ENCODE measurements at regions of chr2 and their contacts with region 1.

Region 1: GRCh38 chr2:95053543-95053942 is 28.0 kb downstream of the MAL start:
- DNase-seq: peak; percentile 63
- ATAC-seq: peak; percentile 86
- H3K4me3 Mint-ChIP-seq: no peak overlapping the region
- H3K27ac Mint-ChIP-seq: no peak overlapping the region
- H3K4me1 Mint-ChIP-seq: peaks cover 5% of the 10 kb centered on the region
- H3K27me3 Mint-ChIP-seq: peaks cover 4% of the 10 kb centered on the region
- CTCF ChIP-seq: no peak

Region 2: DNA sequence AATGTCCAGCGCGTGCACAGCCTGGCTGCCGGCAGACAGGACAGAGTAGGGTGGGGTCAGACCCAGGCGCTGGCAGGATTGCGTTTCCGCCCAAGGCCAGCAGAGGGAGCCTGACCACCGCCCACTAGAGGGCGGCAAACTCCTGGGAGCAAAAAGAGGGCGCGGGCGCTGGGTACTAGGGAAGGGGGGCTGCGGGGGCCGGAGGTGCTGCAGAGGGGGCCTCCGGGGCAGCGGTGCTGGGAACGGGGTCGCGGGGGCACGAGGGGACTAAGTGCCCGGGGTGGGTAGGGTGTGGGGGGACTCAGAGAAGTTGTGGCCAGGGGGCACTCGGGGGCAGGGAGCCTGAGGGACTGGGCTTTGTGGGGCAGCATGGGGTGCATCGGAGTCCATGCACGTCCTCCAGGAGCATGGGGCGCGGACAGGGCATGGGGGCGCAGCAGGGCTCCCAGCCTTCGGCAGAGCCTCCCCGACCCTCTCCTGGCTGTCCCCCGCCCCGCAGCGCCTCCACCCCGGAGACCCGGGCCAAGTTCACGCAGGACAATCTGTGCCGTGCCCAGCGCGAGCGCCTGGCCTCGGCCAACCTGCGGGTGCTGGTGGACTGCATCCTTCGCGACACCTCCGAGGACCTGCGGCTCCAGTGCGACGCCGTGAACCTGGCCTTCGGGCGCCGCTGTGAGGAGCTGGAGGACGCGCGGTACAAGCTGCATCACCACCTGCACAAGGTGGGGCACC is 179.1 kb before region 1 on chr2:
- CTCF ChIA-PET with region 1: interaction called, 19 read pairs
- POLR2A ChIA-PET with region 1: no interaction called
- DNase-seq: peak; percentile 92
- ATAC-seq: peak; percentile 80
- H3K4me3 Mint-ChIP-seq: peak overlapping the region; percentile 49
- H3K27ac Mint-ChIP-seq: no peak overlapping the region
- H3K4me1 Mint-ChIP-seq: peaks cover 10% of the 10 kb centered on the region
- H3K27me3 Mint-ChIP-seq: peaks cover 40% of the 10 kb centered on the region
- CTCF ChIP-seq: peak; percentile 83

Region 3: GRCh38 chr2:94947097-94948016 is 106.2 kb before region 1 on chr2:
- CTCF ChIA-PET with region 1: no interaction called
- POLR2A ChIA-PET with region 1: no interaction called
- DNase-seq: no peak
- ATAC-seq: no peak
- H3K4me3 Mint-ChIP-seq: no peak overlapping the region
- H3K27ac Mint-ChIP-seq: no peak overlapping the region
- H3K4me1 Mint-ChIP-seq: no peaks in the 10 kb centered on the region
- H3K27me3 Mint-ChIP-seq: peaks cover 36% of the 10 kb centered on the region
- CTCF ChIP-seq: no peak

Region 4: GRCh38 chr2:94986392-94986963 is 67.1 kb before region 1 on chr2:
- CTCF ChIA-PET with region 1: interaction called, 66 read pairs
- POLR2A ChIA-PET with region 1: interaction called, 3 read pairs
- DNase-seq: peak; percentile 75
- ATAC-seq: peak; percentile 87
- H3K4me3 Mint-ChIP-seq: no peak overlapping the region
- H3K27ac Mint-ChIP-seq: no peak overlapping the region
- H3K4me1 Mint-ChIP-seq: 0 out of 2 replicates have a peak, but pooled peaks cover 4% of the 10 kb centered on the region
- H3K27me3 Mint-ChIP-seq: no peaks in the 10 kb centered on the region
- CTCF ChIP-seq: peak; percentile 78

Region 5: DNA sequence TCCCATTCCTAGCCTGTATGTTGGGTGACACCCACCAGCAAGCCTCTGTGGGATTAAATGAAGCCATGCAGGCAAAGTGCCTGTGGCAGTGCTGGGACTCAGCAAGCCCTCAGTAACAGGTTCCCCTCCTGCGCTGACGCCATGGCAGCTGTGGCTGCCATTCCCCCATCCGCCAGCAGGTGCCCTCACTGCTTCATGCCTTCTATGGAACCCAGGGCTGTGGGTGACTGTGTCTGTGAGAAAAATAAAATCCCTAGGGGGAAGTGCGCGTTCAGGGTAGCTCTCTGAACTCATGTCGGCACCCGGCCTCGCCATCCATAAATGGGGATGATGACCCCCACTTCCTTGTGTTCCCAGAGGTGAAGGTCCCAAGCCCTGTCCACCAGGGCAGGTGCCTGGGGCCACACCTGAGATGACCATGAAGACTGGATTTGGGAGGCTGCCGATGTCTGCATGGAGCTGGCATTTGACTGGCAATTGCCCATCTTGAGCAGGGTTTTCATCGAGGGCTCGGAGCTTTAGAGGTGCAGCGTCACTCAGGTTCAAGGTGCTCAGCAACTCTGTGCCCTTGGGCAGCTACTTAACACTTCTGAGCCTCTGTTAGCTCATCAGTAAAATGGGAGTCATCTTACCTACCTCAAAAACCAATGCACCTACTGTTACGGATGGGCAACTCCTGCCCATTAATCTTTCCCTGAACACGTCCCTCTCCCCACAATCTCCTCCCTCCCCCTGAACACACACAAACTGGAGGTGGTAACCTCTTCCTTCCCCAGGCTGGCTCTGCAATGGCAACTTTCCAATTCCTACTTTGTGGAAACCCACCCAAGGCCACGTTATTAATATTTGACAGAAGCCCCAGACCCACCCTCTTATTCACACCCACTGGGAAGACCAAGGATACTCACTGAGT is 31.0 kb before region 1 on chr2:
- CTCF ChIA-PET with region 1: interaction called, 156 read pairs
- POLR2A ChIA-PET with region 1: no interaction called
- DNase-seq: peak; percentile 87
- ATAC-seq: peak; percentile 63
- H3K4me3 Mint-ChIP-seq: no peak overlapping the region
- H3K27ac Mint-ChIP-seq: no peak overlapping the region
- H3K4me1 Mint-ChIP-seq: peaks cover 41% of the 10 kb centered on the region
- H3K27me3 Mint-ChIP-seq: peaks cover 56% of the 10 kb centered on the region
- CTCF ChIP-seq: peak; percentile 90

Region 6: DNA sequence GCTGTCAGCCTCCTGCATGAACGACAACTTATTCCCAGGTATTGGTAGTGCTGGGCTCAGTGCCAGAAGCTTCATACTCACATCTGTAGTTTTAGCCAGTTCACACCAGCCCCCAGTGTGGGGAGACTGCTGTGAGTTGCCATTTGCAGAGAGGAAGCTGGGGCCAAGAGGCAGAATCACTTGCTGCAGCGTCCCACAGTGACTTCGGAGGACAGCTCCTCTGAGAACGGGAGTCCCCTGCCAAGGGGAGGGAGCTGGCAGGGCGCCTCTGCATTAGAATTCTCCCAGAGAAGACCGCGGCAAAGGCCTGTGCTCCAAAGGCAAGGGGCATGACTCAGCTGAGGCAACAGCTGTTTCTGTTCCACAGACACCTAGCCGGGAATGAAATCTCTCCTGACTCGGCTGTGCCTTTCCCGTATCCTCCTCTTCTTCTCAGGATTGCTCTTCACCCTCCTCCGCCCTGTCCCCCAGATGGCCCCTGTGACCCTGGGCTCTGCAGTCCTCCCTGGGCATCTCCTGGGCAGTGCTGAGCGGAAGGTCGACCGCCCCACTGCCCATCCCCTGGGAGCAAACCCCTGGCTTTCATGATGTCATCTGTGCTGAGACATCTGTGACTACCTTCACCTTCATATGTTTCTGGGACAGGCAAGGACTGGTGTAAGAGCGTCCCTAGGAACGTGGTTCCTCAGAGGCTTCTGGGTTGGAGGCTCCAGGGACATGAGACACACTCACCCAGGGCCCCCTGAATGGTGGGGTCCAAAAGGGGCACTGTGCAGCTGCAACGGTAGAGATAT is 10.0 kb before region 1 on chr2:
- CTCF ChIA-PET with region 1: interaction called, 19 read pairs
- POLR2A ChIA-PET with region 1: no interaction called
- DNase-seq: no peak
- ATAC-seq: no peak
- H3K4me3 Mint-ChIP-seq: no peak overlapping the region
- H3K27ac Mint-ChIP-seq: no peak overlapping the region
- H3K4me1 Mint-ChIP-seq: peaks cover 11% of the 10 kb centered on the region; the same call in 1 of the 2 replicates
- H3K27me3 Mint-ChIP-seq: peaks cover 2% of the 10 kb centered on the region; the same call in 1 of the 2 replicates
- CTCF ChIP-seq: no peak

Region 7: GRCh38 chr2:95115418-95115817 is 61.9 kb after region 1 on chr2:
- CTCF ChIA-PET with region 1: interaction called, 21 read pairs
- POLR2A ChIA-PET with region 1: no interaction called
- DNase-seq: peak; percentile 78
- ATAC-seq: peak; percentile 99
- H3K4me3 Mint-ChIP-seq: no peak overlapping the region
- H3K27ac Mint-ChIP-seq: 0 out of 2 replicates have a peak overlapping the region, but pooled peaks have one; percentile 41
- H3K4me1 Mint-ChIP-seq: peaks cover 27% of the 10 kb centered on the region
- H3K27me3 Mint-ChIP-seq: no peaks in the 10 kb centered on the region
- CTCF ChIP-seq: peak; percentile 66

Measured in WTC11 (cell line).